CD4-positive, alpha-beta memory T cell (primary cell): ENCODE measurements at regions of chr10 and their contacts with region 1.

Region 1: GRCh38 chr10:71319042-71319799 is at the start of gene SLC29A3:
- DNase-seq: peak; percentile 78 to 87 (median 80)
- H3K4me3 ChIP-seq: peak within 1 kb of the TSS; percentile 69 to 80
- H3K4me3 Mint-ChIP-seq: peak within 1 kb of the TSS; percentile 87 to 97 (median 92)
- H3K27ac ChIP-seq: peak within 1 kb of the TSS; percentile 54
- H3K27ac Mint-ChIP-seq: peak within 1 kb of the TSS; percentile 78 to 93 (median 89)
- H3K4me1 ChIP-seq: peaks cover 19% of the 10 kb centered on the region
- H3K4me1 Mint-ChIP-seq: peaks cover 16 to 51% (median 27%) of the 10 kb centered on the region in 4 donors
- H3K27me3 ChIP-seq: no peaks in the 10 kb centered on the region
- H3K27me3 Mint-ChIP-seq: no peaks in the 10 kb centered on the region
- total RNA-seq, gene SLC29A3: 7.0 to 9.1 TPM

Region 2: DNA sequence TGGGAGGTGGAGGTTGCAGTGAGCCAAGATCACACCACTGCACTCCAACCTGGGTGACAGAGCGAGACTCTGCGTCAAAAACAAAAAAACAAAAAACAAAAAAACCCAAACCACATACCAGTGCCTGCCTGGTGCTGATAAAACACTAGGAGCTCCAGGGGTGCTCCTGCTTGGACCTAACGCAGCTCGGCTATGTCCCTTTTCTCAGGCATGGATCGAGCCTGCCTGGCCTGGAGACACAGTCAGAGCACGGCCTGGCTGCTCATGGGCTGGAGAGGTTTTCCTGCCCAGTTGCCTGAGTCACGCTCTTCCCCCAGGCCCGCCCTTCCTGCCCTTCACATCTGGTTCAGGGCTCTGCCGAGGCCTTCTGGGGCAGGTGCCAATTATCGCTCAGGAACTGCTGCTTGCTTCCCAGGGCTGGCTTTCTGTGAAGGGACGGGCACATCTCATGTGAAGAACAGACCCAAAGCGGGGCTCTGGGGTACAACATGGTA is 1022.8 kb before region 1 on chr10:
- CTCF ChIA-PET with region 1: no interaction called
- POLR2A ChIA-PET with region 1: no interaction called
- intact Hi-C with region 1: no loop called
- DNase-seq: no peak
- H3K4me3 ChIP-seq: no peak overlapping the region
- H3K4me3 Mint-ChIP-seq: no peak overlapping the region
- H3K27ac ChIP-seq: no peak overlapping the region
- H3K27ac Mint-ChIP-seq: peak overlapping the region in 1 of 7 donors; percentile 18
- H3K4me1 ChIP-seq: no peaks in the 10 kb centered on the region
- H3K4me1 Mint-ChIP-seq: no peaks in the 10 kb centered on the region
- H3K27me3 ChIP-seq: no peaks in the 10 kb centered on the region
- H3K27me3 Mint-ChIP-seq: no peaks in the 10 kb centered on the region

Region 3: DNA sequence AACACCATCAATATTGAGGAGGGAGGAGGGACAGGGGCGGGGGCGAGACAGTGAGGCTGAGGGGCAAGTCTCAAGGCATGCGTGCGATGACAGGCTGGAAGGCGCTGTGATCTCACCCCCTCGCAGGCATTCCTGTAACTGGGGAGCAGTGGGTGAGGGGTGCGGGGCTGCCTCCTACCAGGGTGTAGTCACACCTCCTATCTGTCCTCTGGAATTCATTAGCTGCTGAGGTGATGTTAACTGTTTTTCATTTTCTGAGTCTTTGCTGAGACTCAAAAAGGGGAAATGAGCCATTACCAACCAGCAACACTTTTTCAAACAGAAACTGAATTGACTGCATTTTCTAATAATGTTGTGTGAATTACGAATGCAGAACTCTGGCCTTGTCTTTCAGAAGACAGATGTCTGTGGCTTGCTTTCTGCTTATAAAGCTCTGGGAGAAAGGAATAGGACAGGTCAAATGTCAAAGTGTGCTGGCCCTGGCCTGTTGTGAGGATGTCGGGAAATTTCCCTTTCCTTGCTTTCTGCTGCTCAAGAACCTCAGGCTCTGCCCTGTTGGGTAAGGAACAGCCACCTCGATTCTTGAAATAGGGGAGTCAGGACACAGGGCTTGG is 53.8 kb after region 1 on chr10:
- CTCF ChIA-PET with region 1: interaction called, 23 read pairs
- POLR2A ChIA-PET with region 1: interaction called, 17 read pairs
- intact Hi-C with region 1: loop called (anchors 1 kb)
- DNase-seq: no peak
- H3K4me3 ChIP-seq: no peak overlapping the region
- H3K4me3 Mint-ChIP-seq: no peak overlapping the region
- H3K27ac ChIP-seq: no peak overlapping the region
- H3K27ac Mint-ChIP-seq: no peak overlapping the region
- H3K4me1 ChIP-seq: no peaks in the 10 kb centered on the region
- H3K4me1 Mint-ChIP-seq: peaks cover 4 to 11% (median 7%) of the 10 kb centered on the region in 4 donors
- H3K27me3 ChIP-seq: no peaks in the 10 kb centered on the region
- H3K27me3 Mint-ChIP-seq: peaks cover 5 to 14% of the 10 kb centered on the region in 2 donors

Region 4: GRCh38 chr10:71378336-71379117 is 59.3 kb after region 1 on chr10:
- CTCF ChIA-PET with region 1: interaction called, 23 read pairs
- POLR2A ChIA-PET with region 1: interaction called, 17 read pairs
- intact Hi-C with region 1: loop called (anchors 1 kb)
- DNase-seq: no peak
- H3K4me3 ChIP-seq: no peak overlapping the region
- H3K4me3 Mint-ChIP-seq: peak overlapping the region in 2 of 8 donors; percentile 8 to 17
- H3K27ac ChIP-seq: no peak overlapping the region
- H3K27ac Mint-ChIP-seq: no peak overlapping the region
- H3K4me1 ChIP-seq: no peaks in the 10 kb centered on the region
- H3K4me1 Mint-ChIP-seq: peaks cover 4 to 15% (median 7%) of the 10 kb centered on the region in 4 donors
- H3K27me3 ChIP-seq: no peaks in the 10 kb centered on the region
- H3K27me3 Mint-ChIP-seq: peaks cover 0 to 5% of the 10 kb centered on the region in 2 donors

Region 5: GRCh38 chr10:71569775-71570588 is 250.8 kb after region 1 on chr10:
- CTCF ChIA-PET with region 1: interaction called, 117 read pairs
- POLR2A ChIA-PET with region 1: no interaction called
- intact Hi-C with region 1: loop called (anchors 1 kb)
- DNase-seq: peak; percentile 54 to 68 (median 63)
- H3K4me3 ChIP-seq: no peak overlapping the region
- H3K4me3 Mint-ChIP-seq: no peak overlapping the region
- H3K27ac ChIP-seq: no peak overlapping the region
- H3K27ac Mint-ChIP-seq: no peak overlapping the region
- H3K4me1 ChIP-seq: no peaks in the 10 kb centered on the region
- H3K4me1 Mint-ChIP-seq: no peaks in the 10 kb centered on the region
- H3K27me3 ChIP-seq: no peaks in the 10 kb centered on the region
- H3K27me3 Mint-ChIP-seq: peaks cover 0 to under 1% of the 10 kb centered on the region in 2 donors

Region 6: DNA sequence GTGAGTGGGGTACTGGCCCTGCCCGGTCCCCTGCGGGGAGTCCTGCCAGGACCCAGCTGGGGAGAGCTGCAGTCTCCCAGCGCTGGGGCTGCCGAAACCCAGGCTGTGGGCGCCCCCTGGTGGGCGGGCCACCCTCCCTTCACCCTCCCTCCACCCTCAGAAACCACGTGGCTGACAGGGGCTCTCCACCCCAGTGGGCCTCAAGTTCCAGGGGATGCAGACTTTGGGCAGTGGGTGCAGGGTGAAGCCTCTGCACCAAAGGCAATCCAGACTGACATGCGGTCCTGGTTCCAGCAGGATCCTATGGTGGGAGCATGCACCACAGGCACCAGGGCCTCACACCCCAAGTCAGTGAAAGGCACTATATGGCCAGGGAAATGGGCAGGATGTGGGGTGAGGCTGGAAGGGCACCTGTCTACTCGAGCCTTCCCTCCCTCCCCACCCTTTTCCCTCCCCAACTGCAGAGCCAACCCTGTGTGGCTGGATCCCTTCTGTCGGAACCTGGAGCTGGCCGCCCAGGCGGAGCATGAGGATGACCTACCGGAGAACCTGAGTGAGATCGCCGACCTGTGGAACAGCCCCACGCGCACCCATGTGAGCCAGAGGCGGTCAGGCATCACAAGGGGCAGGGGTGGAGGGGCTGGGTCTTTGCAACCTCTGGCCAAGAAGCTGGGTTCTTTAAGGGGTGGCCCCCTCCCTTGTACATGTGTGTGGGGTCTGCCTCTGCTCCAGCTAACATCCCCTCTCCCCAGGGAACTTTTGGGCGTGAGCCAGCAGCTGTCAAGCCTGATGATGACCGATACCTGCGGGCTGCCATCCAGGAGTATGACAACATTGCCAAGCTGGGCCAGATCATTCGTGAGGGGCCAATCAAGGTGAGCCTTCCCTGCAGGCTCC is 493.0 kb after region 1 on chr10:
- CTCF ChIA-PET with region 1: interaction called, 13 read pairs
- POLR2A ChIA-PET with region 1: no interaction called
- intact Hi-C with region 1: loop called (anchors 1 kb)
- DNase-seq: peak; percentile 63 to 78 (median 75)
- H3K4me3 ChIP-seq: no peak overlapping the region
- H3K4me3 Mint-ChIP-seq: no peak overlapping the region
- H3K27ac ChIP-seq: no peak overlapping the region
- H3K27ac Mint-ChIP-seq: no peak overlapping the region
- H3K4me1 ChIP-seq: no peaks in the 10 kb centered on the region
- H3K4me1 Mint-ChIP-seq: peaks cover 0 to 2% (median 0%) of the 10 kb centered on the region in 4 donors
- H3K27me3 ChIP-seq: no peaks in the 10 kb centered on the region
- H3K27me3 Mint-ChIP-seq: no peaks in the 10 kb centered on the region

Region 7: DNA sequence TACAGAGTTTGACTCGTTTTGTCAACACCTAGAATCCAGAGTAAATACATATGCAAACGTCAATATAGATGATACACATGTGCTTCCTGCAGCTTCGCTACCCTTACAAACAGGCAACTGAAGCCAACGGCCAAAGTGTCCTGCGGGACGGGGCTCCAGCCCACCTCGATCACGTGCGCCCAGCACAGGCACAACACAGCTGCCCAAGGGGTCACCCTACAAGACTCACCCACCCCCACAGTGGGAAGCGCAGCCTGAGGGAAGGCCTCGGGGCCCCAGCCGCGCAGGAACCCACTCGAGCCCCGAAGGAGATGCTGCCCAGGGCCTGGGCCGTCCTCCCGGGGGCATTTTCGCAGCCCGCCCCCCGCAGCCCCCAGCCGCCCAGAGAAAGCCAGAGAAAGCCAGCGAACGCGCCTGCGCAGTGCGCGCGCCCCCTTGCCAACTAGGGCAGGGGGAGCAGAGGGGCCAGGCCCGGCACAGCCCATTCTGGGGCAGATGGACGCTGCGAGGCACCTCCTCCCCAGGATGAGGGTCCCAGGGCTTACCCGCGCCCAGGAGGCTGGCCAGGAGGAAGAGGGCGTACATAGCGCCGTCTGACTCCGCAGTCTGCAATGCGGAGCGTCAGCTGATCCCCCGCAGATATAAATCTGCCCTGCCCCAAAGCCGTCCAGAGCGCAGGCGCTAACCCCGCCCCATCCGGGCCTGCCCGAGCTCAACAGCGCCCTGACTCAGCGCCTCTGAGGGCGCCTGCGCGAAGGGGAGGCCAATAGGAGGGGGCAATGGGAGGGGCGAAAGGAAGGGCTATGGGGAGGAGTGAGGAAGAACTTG is 531.6 kb after region 1 on chr10 and contains the start of gene PSAP:
- CTCF ChIA-PET with region 1: interaction called, 6 read pairs
- POLR2A ChIA-PET with region 1: interaction called, 3 read pairs
- intact Hi-C with region 1: loop called (anchors 1 kb)
- DNase-seq: peak; percentile 97 to 98 (median 97)
- H3K4me3 ChIP-seq: peak within 1 kb of the TSS; percentile 98 to 99
- H3K4me3 Mint-ChIP-seq: peak within 1 kb of the TSS; percentile 92 to 99 (median 97)
- H3K27ac ChIP-seq: peak within 1 kb of the TSS; percentile 81
- H3K27ac Mint-ChIP-seq: peak within 1 kb of the TSS; percentile 84 to 96 (median 92)
- H3K4me1 ChIP-seq: peaks cover 21% of the 10 kb centered on the region
- H3K4me1 Mint-ChIP-seq: peaks cover 28 to 51% (median 38%) of the 10 kb centered on the region in 4 donors
- H3K27me3 ChIP-seq: no peaks in the 10 kb centered on the region
- H3K27me3 Mint-ChIP-seq: no peaks in the 10 kb centered on the region
- total RNA-seq, gene PSAP: 248 to 257 TPM

Region 8: DNA sequence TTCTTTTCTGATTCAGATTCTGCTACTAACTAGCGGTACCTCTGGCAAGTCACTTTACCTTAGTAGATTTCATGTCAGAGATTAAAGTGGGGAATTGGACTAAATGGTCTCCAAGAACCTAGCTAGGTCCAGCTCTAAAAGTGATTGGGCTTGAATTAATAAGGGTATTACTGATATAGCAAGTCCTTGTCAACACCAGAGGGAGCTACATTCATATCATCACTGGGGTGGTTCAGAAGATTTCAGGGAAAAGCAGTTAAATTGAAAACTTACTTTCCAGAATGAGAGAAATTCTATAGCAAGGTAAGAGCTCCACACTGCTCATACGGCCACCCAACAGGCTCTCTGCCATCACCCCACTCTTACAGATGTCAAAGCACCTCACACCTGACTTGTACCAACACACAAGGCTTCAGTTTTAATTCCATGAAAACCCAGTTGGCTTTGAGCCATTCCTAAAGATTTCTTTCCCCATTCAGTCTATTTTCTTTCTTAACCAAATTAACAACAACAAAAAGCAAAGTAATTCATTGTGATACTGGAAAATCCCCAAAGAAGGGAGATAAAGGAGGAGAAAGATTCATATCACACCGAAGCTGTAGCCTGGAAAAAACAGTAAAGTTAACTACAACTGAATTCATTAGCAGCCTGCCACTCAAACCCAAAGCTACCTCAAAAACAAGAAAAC is 807.1 kb after region 1 on chr10:
- CTCF ChIA-PET with region 1: no interaction called
- POLR2A ChIA-PET with region 1: no interaction called
- intact Hi-C with region 1: no loop called
- DNase-seq: peak in 3 of 5 donors; percentile 16 to 28 (median 25)
- H3K4me3 ChIP-seq: no peak overlapping the region
- H3K4me3 Mint-ChIP-seq: no peak overlapping the region
- H3K27ac ChIP-seq: no peak overlapping the region
- H3K27ac Mint-ChIP-seq: peak overlapping the region in 5 of 7 donors; percentile 25 to 87 (median 38)
- H3K4me1 ChIP-seq: peaks cover 29% of the 10 kb centered on the region
- H3K4me1 Mint-ChIP-seq: peaks cover 24 to 34% (median 26%) of the 10 kb centered on the region in 4 donors
- H3K27me3 ChIP-seq: no peaks in the 10 kb centered on the region
- H3K27me3 Mint-ChIP-seq: no peaks in the 10 kb centered on the region